Transverse colon (tissue), 4 donors: ENCODE measurements at regions of chr4 and their contacts with region 1.

Region 1: DNA sequence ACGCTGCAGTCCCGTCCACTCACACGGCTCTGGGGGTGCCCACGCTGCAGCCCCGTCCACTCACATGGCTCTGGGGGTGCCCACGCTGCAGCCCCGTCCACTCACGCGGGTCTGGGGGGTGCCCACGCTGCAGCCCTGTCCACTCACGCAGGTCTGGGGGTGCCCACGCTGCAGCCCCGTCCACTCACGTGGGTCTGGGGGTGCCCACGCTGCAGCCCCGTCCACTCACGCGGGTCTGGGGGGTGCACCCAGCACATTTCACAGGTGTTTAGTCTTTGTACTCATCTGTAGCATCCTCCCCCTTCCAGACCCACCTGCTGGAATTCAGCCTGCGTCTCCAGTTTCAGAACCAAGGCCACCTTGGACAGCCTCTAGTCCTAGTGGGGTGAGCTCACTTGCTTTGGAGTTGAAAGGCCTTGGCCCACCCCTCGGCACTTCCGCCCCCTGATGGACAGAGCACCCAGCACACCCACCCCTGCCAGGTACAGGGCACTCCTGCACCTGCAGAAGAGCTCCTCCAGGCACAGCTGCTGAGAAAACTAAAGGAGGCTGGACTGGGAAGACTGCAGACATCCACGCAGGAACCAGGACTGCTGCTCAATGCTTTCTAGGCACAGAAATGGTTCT is 73.0 kb downstream of the ABLIM2 start:
- DNase-seq: no peak
- H3K4me3 ChIP-seq: no peak overlapping the region
- H3K27ac ChIP-seq: no peak overlapping the region
- H3K4me1 ChIP-seq: peaks cover 3 to 14% (median 6%) of the 10 kb centered on the region in 4 donors
- H3K27me3 ChIP-seq: no peaks in the 10 kb centered on the region
- CTCF ChIP-seq: no peak
- EP300 ChIP-seq: no peak
- POLR2A ChIP-seq: no peak

Region 2: GRCh38 chr4:6308899-6309643 is 1776.5 kb before region 1 on chr4:
- in situ Hi-C with region 1: no loop called
- intact Hi-C with region 1: loop called (anchors 5 kb)
- DNase-seq: no peak
- H3K4me3 ChIP-seq: peak overlapping the region; percentile 2 to 45 (median 28)
- H3K27ac ChIP-seq: peak overlapping the region in 1 of 4 donors; percentile 25
- H3K4me1 ChIP-seq: no peaks in the 10 kb centered on the region
- H3K27me3 ChIP-seq: peaks cover 21% of the 10 kb centered on the region
- CTCF ChIP-seq: no peak
- EP300 ChIP-seq: no peak
- POLR2A ChIP-seq: no peak